ENCODE measurements at regions of chr15 and their contacts with region 1.

Region 1: DNA sequence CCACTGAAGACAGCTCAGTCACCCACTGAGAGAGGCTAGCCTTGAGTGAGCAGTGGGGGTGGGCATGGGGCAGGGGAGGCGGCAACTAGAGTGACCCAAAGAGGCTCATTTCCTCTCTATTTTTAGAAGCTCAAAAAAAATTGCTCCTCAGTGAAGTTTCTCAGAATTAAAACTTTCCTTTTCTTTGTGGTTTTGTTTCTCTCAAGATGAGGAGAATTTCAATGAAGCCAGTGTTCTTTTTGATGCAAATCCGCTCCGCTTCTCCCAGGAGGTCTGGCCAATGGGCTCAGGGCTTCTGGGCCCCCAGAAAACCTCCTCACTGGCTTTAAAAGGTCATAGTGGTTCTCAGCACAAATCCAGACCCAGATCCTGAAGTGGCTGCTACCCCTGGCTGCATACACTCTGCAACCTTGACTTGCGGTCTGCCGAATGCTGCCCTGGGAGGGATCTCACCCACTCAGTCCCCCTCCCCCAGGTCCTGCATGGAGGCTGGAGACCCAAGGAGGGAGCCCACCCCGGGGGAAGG is at the start of gene ACSBG1:
- DNase-seq: no peak
- ATAC-seq: no peak
- H3K4me3 ChIP-seq: no peak within 1 kb of the TSS
- H3K27ac ChIP-seq: no peak within 1 kb of the TSS
- H3K4me1 ChIP-seq: no peaks in the 10 kb centered on the region
- H3K27me3 ChIP-seq: peaks cover 0 to 5% (median 0%) of the 10 kb centered on the region in 7 donors
- CTCF ChIP-seq: no peak
- total RNA-seq, gene ACSBG1: 0.22 to 0.30 TPM in 2 of 10 donors, not detected in the others

Region 2: GRCh38 chr15:78204351-78205309 is 29.9 kb before region 1 on chr15:
- intact Hi-C with region 1: loop called in 1 of 10 experiments (anchors 5 kb)
- DNase-seq: peak; percentile 41 to 43
- ATAC-seq: peak; percentile 56 to 78 (median 70)
- H3K4me3 ChIP-seq: no peak overlapping the region
- H3K27ac ChIP-seq: peak overlapping the region in 9 of 10 donors; percentile 14 to 73 (median 59)
- H3K4me1 ChIP-seq: peaks cover 15 to 50% (median 36%) of the 10 kb centered on the region in 9 donors
- H3K27me3 ChIP-seq: no peaks in the 10 kb centered on the region
- CTCF ChIP-seq: no peak